Common myeloid progenitor, CD34-positive (primary cell): ENCODE measurements at regions of chr5 and their contacts with region 1.

Region 1: DNA sequence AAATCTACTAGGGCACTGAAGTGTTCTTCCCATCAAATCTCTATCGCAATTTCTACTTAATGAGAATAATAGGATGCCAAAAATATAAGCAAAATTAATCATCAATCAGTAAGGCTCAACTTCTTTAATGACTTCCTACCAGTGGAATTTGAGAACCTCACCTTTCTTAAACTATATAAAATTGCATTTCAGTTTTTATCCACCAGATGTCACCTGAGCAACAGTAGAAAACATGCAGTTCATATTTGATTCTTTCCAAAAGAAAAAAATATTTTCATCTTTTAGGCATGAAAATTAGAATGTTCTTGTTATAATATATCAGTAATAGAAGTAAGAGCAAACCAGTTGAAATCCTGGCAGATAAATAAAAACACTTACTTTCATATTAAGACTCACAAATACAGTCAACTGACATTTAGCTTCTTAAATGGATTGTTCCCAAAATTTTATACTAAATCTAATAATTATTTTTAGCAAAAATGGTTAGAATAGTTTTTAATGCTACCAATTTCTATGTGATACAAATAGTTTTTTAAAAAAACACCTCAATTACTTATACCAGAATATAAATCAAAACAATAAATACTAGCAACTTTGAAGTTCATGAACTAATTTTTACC is 13.4 kb upstream of the CCDC112 start:
- DNase-seq: peak; percentile 39 to 71 (median 58)
- H3K4me3 ChIP-seq: no peak overlapping the region
- H3K27ac ChIP-seq: no peak overlapping the region
- H3K4me1 ChIP-seq: no peaks in the 10 kb centered on the region
- H3K27me3 ChIP-seq: peaks cover 0 to 3% (median 0%) of the 10 kb centered on the region in 5 experiments

Region 2: DNA sequence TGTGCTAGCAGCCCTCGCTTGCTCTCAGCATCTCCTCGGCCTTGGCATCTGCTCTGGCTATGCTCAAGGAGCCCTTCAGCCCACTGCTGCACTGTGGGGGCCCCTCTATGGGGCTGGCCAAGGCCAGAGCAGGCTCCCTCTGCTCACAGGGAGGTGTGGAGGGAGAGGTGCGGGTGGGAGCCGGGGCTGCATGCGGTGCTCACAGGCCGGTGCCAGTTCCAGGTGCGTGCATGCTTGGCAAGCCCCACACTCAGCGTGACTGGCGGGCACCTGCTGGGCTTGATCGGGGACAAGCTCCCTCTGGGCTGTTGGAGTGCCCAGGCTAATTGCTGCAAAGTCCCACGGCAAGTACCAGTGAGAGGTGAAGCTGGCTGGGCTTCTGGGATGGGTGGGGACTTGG is 310.7 kb before region 1 on chr5:
- CTCF ChIA-PET with region 1: no interaction called
- POLR2A ChIA-PET with region 1: no interaction called
- DNase-seq: no peak
- H3K4me3 ChIP-seq: no peak overlapping the region
- H3K27ac ChIP-seq: no peak overlapping the region
- H3K4me1 ChIP-seq: no peaks in the 10 kb centered on the region
- H3K27me3 ChIP-seq: no peaks in the 10 kb centered on the region

Region 3: GRCh38 chr5:115575167-115576070 is 265.6 kb after region 1 on chr5:
- CTCF ChIA-PET with region 1: interaction called, 68 read pairs
- POLR2A ChIA-PET with region 1: no interaction called
- DNase-seq: no peak
- H3K4me3 ChIP-seq: no peak overlapping the region
- H3K27ac ChIP-seq: no peak overlapping the region
- H3K4me1 ChIP-seq: peaks cover 0 to 3% (median 0%) of the 10 kb centered on the region in 4 experiments
- H3K27me3 ChIP-seq: no peaks in the 10 kb centered on the region

Region 4: DNA sequence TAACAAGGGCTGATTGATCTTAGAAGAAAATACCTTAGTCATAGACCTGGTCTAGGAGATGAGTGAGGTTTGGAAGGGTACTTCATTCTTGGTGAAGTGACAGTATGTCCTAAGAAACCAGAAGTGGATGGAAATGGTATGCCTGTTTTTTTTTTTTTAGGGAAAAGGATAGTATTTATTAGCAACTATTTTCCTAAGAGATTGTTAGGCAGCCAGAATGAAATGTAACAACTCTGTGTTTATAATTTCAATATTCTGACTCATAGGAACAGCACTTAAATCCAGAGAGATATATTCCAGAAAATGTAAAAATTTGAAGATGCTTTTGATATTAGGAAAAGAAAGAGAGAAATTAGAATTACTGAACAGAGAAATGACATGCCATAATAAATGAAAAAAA is 701.2 kb after region 1 on chr5:
- CTCF ChIA-PET with region 1: no interaction called
- POLR2A ChIA-PET with region 1: no interaction called
- DNase-seq: no peak
- H3K4me3 ChIP-seq: no peak overlapping the region
- H3K27ac ChIP-seq: no peak overlapping the region
- H3K4me1 ChIP-seq: no peaks in the 10 kb centered on the region
- H3K27me3 ChIP-seq: no peaks in the 10 kb centered on the region